ENCODE measurements at regions of chr5 and their contacts with region 1.

Region 1: GRCh38 chr5:142548739-142549275 is 137.1 kb downstream of the FGF1 start:
- DNase-seq: peak in 4 of 5 donors; percentile 88 to 96 (median 92)
- H3K4me3 ChIP-seq: no peak overlapping the region
- H3K27ac ChIP-seq: no peak overlapping the region
- H3K4me1 ChIP-seq: peaks cover 0 to 5% (median 0%) of the 10 kb centered on the region in 3 donors
- H3K27me3 ChIP-seq: no peaks in the 10 kb centered on the region
- CTCF ChIP-seq: peak; percentile 83

Region 2: GRCh38 chr5:142151436-142152383 is 397.1 kb before region 1 on chr5:
- intact Hi-C with region 1: loop called (anchors 5 kb)
- DNase-seq: peak in 3 of 5 donors; percentile 57 to 92 (median 86)
- H3K4me3 ChIP-seq: no peak overlapping the region
- H3K27ac ChIP-seq: no peak overlapping the region
- H3K4me1 ChIP-seq: peaks cover 0 to 2% (median 0%) of the 10 kb centered on the region in 3 donors
- H3K27me3 ChIP-seq: no peaks in the 10 kb centered on the region
- CTCF ChIP-seq: peak; percentile 76

Region 3: DNA sequence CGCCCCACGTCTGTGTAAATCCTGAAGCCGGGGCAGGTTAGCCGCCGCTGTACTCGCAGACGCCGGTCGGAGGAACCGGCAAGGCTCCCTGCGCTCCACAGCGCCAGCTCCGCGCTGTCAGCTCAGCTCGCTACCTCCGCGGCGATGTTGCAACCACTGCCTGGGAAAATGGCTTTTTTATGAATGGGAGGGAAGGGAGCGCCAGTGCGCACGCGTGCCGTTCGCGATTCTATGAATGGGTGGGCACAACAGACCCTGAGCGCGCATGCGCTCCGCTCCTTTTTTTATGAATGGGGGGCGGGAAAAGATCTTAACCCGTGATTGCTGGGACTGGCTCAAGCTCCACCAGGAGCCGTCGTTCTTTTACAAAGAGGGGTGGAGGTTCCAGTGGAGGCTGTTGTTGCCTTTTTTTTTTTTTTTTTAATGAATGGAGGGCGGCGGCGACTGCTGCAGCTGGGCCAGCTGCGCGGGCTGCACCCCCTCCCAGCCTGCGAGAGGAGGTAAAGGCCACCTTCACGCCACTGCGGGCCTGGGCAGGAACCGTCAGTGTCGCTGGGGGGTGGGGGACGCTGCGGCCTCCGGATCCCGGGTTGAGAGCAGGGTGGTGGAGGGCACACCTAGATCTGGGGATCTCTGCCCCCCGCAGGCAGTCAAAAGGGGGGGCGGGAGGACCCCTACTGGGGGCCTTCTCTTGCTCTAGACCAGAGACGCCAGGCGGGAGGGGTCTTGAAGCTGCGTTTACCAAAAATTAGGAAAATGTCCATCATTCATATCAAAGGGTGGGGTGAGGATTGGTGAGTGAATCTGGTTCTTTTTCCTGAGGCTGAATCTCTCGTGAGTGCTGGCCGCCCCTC is 223.7 kb before region 1 on chr5 and contains the start of gene SPRY4:
- intact Hi-C with region 1: loop called (anchors 10 kb)
- DNase-seq: peak; percentile 98 to 99 (median 99)
- H3K4me3 ChIP-seq: peak within 1 kb of the TSS; percentile 74 to 90 (median 78)
- H3K27ac ChIP-seq: peak within 1 kb of the TSS; percentile 93 to 96
- H3K4me1 ChIP-seq: peaks cover 2 to 20% (median 6%) of the 10 kb centered on the region in 3 donors
- H3K27me3 ChIP-seq: no peaks in the 10 kb centered on the region
- CTCF ChIP-seq: no peak
- total RNA-seq, gene SPRY4: 16.6 TPM

Region 4: DNA sequence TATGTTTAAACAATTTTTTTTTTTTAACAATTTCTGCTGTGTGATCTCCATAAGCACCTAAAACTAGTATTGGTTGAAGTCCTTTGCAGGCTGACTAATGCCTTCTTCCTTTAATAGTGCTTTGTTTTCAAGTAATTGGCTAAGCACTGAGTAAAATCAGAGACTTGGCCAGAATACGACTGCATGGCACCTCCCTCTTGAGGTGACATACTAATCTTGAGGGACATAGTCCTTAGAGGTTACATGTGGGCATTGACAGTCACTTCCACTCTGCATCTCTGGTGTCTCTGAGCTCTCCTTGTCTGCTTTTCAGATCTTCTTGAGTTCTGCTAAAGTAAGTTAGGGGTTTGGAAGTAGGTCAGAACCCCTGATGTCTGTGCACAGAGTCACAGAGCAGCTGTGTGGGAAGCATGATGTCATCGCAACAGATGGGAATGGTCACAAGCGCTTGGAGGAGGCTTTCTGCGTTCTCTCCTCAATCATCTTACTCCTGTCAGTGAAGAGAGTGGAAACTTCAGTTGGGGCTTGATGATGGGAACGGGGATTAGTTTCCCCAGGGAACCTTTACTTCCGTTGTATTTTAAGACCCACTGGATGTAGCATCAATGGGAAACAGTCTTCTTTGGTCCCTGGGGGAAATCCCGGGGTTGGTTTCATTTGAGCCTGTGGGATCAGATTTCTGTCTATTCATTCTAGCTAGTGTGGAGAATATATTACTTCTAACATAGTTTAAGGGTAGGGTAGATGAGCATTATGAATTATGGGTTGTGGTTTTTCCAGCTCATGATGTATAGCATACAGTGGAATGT is 358.3 kb after region 1 on chr5:
- intact Hi-C with region 1: no loop called
- DNase-seq: peak in 1 of 5 donors; percentile 59
- H3K4me3 ChIP-seq: no peak overlapping the region
- H3K27ac ChIP-seq: no peak overlapping the region
- H3K4me1 ChIP-seq: peaks cover 0 to 11% (median 3%) of the 10 kb centered on the region in 3 donors
- H3K27me3 ChIP-seq: no peaks in the 10 kb centered on the region
- CTCF ChIP-seq: no peak

Measured in kidney (tissue), 22 donors.